Activated CD4-positive, alpha-beta memory T cell treated with anti-CD3 and anti-CD28 coated beads for 36 hours (primary cell): ENCODE measurements at regions of chr1 and their contacts with region 1.

Region 1: GRCh38 chr1:85276215-85276977 is at the start of gene BCL10:
- DNase-seq: peak; percentile 98
- H3K4me3 Mint-ChIP-seq: peak within 1 kb of the TSS; percentile 82
- H3K27ac Mint-ChIP-seq: peak within 1 kb of the TSS; percentile 92
- H3K4me1 Mint-ChIP-seq: peaks cover 50% of the 10 kb centered on the region
- H3K27me3 Mint-ChIP-seq: peaks cover 5% of the 10 kb centered on the region
- total RNA-seq, gene BCL10: 31.1 to 31.5 TPM

Region 2: GRCh38 chr1:84573967-84574842 is 702.2 kb before region 1 on chr1 and contains the start of gene CTBS:
- CTCF ChIA-PET with region 1: no interaction called
- POLR2A ChIA-PET with region 1: interaction called, 5 read pairs
- intact Hi-C with region 1: loop called (anchors 5 kb)
- DNase-seq: peak; percentile 90
- H3K4me3 Mint-ChIP-seq: peak within 1 kb of the TSS; percentile 98
- H3K27ac Mint-ChIP-seq: peak within 1 kb of the TSS; percentile 100
- H3K4me1 Mint-ChIP-seq: peaks cover 35% of the 10 kb centered on the region
- H3K27me3 Mint-ChIP-seq: peaks cover 1% of the 10 kb centered on the region
- total RNA-seq, gene CTBS: 22.9 to 24.2 TPM

Region 3: DNA sequence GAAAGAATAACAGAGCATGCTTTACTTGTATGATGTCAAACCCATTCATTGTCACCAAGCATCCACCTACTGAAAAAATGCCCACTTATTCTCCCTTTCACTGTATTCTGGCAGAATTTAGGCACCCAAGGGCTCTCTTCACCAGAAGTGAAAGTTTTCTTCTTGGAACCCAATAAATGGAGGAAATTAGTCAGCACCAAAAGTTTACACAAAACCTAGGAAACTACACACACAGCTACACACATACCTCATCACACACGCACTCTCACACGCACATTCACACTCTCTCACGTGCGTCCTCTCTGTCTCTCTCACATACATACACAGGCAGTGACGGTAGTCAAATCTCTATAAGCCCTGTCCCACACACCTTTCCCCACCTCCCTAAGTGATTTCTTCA is 317.1 kb before region 1 on chr1:
- CTCF ChIA-PET with region 1: no interaction called
- POLR2A ChIA-PET with region 1: interaction called, 11 read pairs
- intact Hi-C with region 1: loop called (anchors 1 kb)
- DNase-seq: peak; percentile 81
- H3K4me3 Mint-ChIP-seq: no peak overlapping the region
- H3K27ac Mint-ChIP-seq: peak overlapping the region; percentile 72
- H3K4me1 Mint-ChIP-seq: peaks cover 32% of the 10 kb centered on the region
- H3K27me3 Mint-ChIP-seq: no peaks in the 10 kb centered on the region

Region 4: DNA sequence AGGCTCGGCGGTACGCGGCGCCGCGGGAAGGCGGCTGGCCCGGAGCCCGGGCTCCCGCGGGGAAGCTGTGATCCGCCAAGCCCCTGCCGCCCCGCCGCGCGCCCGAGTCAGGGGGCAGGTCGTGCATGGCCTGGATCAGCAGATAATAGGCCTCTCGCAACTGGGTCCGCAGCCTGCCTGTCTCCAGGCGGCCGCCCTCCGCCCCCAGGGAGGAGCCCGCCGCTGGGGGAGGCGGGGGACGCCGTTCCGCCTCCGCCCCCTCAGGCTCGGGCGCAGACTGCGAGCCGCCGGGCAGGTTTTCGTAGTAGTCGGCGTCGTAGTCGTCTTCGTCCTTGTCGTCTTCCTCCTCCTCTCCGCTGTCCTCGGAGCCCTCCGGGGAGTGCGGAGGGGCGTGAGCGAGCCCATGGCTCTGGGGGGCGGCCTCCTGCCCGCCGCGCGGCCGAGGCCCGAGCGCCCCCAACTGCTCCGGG is 75.5 kb before region 1 on chr1 and contains the start of gene SYDE2:
- CTCF ChIA-PET with region 1: no interaction called
- POLR2A ChIA-PET with region 1: interaction called, 3 read pairs
- intact Hi-C with region 1: loop called (anchors 1 kb)
- DNase-seq: peak; percentile 76
- H3K4me3 Mint-ChIP-seq: peak within 1 kb of the TSS; percentile 97
- H3K27ac Mint-ChIP-seq: peak within 1 kb of the TSS; percentile 89
- H3K4me1 Mint-ChIP-seq: peaks cover 26% of the 10 kb centered on the region
- H3K27me3 Mint-ChIP-seq: peaks cover 5% of the 10 kb centered on the region
- total RNA-seq, gene SYDE2: 2.7 to 2.8 TPM

Region 5: DNA sequence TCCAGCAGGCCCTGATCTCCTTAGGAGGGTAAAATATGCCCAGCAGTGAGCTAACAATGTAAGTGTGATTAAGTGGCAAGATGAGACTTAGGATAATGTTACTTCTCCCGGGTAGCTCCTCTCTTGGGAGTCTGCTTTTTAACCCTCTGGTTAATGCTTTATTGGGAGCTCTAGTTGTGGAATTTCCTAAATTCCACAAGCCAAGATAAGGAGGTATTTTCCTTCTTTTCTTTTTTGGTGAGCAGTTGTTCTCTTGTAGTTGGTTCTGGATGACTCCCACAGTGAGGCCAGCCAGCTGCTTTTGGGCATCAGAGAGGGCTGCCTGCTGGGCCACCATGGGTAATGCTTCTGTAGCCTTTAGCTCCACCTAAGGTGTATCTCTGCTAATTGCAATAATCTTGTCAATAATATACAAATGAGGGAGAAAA is 36.2 kb before region 1 on chr1:
- CTCF ChIA-PET with region 1: no interaction called
- POLR2A ChIA-PET with region 1: no interaction called
- intact Hi-C with region 1: no loop called
- DNase-seq: peak; percentile 34
- H3K4me3 Mint-ChIP-seq: no peak overlapping the region
- H3K27ac Mint-ChIP-seq: no peak overlapping the region
- H3K4me1 Mint-ChIP-seq: peaks cover 9% of the 10 kb centered on the region
- H3K27me3 Mint-ChIP-seq: peaks cover 4% of the 10 kb centered on the region

Region 6: GRCh38 chr1:85297855-85298629 is 21.6 kb after region 1 on chr1:
- CTCF ChIA-PET with region 1: interaction called, 7 read pairs
- POLR2A ChIA-PET with region 1: interaction called, 13 read pairs
- intact Hi-C with region 1: loop called (anchors 1 kb)
- DNase-seq: peak; percentile 91
- H3K4me3 Mint-ChIP-seq: peak overlapping the region; percentile 42
- H3K27ac Mint-ChIP-seq: peak overlapping the region; percentile 71
- H3K4me1 Mint-ChIP-seq: peaks cover 27% of the 10 kb centered on the region
- H3K27me3 Mint-ChIP-seq: peaks cover 38% of the 10 kb centered on the region